Heart left ventricle (tissue), 16 donors: ENCODE measurements at regions of chr11 and their contacts with region 1.

Region 1: DNA sequence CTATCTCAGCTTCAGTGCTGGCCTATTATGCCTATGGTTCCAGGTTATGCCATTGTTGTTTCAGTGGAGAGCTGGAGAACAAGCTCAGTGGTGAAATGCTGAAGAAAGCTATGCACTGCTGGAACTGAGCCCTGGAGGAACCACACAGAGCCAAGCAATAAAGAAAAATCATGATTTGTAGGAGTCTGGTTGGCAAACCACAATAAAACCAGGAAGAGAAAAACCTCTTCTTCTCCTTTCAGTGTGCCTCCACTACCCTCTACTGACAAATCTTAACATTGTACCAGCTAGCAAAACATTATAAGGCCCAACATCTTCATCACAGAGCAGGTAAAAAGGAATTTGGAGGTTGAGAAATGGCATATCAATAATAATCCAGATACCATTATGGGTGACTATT is 5.3 kb downstream of the OR51F2 start:
- DNase-seq: no peak
- ATAC-seq: peak in 2 of 4 donors; percentile 59 to 64
- H3K4me3 ChIP-seq: no peak overlapping the region
- H3K27ac ChIP-seq: no peak overlapping the region
- H3K4me1 ChIP-seq: no peaks in the 10 kb centered on the region
- H3K27me3 ChIP-seq: no peaks in the 10 kb centered on the region
- CTCF ChIP-seq: peak in 11 of 12 donors; percentile 35 to 67 (median 57)
- POLR2A ChIP-seq: no peak

Region 2: DNA sequence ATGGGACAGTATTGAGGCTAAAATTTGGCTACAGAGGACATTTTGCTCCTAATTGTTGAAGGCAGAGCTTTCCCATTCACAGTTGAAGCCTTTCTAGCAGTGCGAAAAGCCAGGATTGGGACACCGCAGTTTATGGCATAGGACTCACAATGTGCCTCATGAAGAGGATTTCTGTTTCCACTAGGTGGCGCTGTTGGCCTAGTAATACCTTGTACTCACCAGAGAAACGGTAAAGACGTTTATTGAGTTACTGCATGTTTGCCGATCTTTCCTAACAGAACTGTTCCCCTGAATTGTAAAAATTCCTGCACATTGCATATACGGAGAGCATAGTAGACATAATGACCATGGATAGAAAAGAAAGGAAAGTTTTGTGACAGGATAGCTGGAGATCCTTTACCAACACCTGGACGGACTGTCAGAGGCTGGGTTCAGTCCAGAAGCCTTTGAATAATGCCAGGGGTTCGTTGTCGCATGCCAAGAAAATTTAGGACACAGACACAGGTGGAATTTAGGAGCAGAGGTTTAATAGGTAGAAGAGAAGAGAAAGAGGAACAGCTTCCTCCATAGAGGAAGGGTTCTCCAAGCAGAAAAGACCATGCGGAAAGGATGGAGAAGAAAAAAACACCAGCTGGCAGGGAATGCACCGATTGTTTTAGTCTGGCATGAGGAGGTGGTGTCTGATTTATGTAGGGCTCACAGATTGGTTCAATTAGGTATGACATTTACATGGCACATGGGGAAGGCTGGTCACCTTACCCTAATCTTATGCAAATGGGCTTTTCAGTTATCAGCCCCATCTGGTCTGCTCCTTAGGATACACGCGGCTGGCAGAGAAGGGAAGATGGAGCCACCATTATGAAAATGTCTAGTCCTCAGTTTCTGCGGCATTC is 200.0 kb before region 1 on chr11:
- intact Hi-C with region 1: loop called in 2 of 10 experiments (anchors 2 kb)
- DNase-seq: peak in 4 of 5 donors; percentile 34 to 69 (median 58)
- ATAC-seq: peak in 2 of 4 donors; percentile 72 to 75
- H3K4me3 ChIP-seq: no peak overlapping the region
- H3K27ac ChIP-seq: no peak overlapping the region
- H3K4me1 ChIP-seq: no peaks in the 10 kb centered on the region
- H3K27me3 ChIP-seq: no peaks in the 10 kb centered on the region
- CTCF ChIP-seq: peak; percentile 36 to 86 (median 68)
- POLR2A ChIP-seq: no peak

Region 3: DNA sequence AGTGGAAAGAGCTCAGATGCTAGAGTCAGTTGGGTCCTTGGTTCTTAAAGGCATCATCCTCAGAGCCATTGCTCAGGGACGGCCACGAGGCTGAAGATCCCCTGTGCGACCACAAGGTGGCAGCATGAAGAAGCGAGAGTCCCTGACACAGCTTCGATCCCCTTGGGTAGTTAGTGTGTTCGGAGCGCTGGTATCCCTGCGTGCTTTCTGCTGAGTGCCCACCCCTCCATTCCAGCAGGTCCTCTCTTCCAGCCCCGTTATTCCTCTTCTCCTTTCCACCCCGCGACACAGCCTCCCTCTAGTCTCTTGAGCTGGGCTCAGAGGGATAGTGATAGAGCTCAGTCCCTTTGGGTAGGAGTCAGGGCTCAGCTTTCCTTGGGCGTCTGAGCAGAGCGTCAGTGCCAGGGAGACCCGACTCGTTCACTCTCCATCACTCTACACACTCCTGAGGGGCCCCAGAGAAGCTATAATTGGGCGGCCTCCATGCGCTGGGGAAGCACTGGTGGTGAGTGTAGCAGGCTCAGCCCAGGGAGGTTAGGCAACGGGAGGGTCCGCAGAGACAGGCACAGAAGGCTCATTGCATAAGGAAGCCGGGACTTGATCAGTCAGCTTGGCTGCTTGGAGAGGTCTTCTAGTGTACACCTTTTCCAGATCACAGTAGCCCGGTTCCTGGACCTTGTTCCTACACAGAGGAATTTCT is 189.3 kb before region 1 on chr11 and contains the start of gene OR51D1:
- intact Hi-C with region 1: loop called (anchors 1 to 2 kb)
- DNase-seq: peak; percentile 70 to 84 (median 75)
- ATAC-seq: peak; percentile 88 to 98 (median 94)
- H3K4me3 ChIP-seq: peak within 1 kb of the TSS in 10 of 12 donors; percentile 28 to 52 (median 38)
- H3K27ac ChIP-seq: peak within 1 kb of the TSS in 3 of 12 donors; percentile 27 to 39 (median 37)
- H3K4me1 ChIP-seq: peaks cover 0 to 17% (median 7%) of the 10 kb centered on the region in 12 donors
- H3K27me3 ChIP-seq: peaks cover 0 to 3% (median 0%) of the 10 kb centered on the region in 9 donors
- CTCF ChIP-seq: peak; percentile 84 to 97 (median 92)
- POLR2A ChIP-seq: no peak
- total RNA-seq, gene OR51D1: not detected

Region 4: GRCh38 chr11:5102246-5102645 is 275.8 kb after region 1 on chr11:
- intact Hi-C with region 1: no loop called
- DNase-seq: no peak
- ATAC-seq: no peak
- H3K4me3 ChIP-seq: no peak overlapping the region
- H3K27ac ChIP-seq: no peak overlapping the region
- H3K4me1 ChIP-seq: no peaks in the 10 kb centered on the region
- H3K27me3 ChIP-seq: peaks cover 0 to 5% (median 0%) of the 10 kb centered on the region in 9 donors
- CTCF ChIP-seq: no peak
- POLR2A ChIP-seq: no peak